ENCODE measurements at regions of chr3 and their contacts with region 1.

Region 1: GRCh38 chr3:28328188-28329151 is 20.1 kb upstream of the ZCWPW2 start:
- DNase-seq: no peak
- ATAC-seq: no peak
- H3K4me3 Mint-ChIP-seq: no peak overlapping the region
- H3K27ac Mint-ChIP-seq: no peak overlapping the region
- H3K4me1 Mint-ChIP-seq: no peaks in the 10 kb centered on the region
- H3K27me3 Mint-ChIP-seq: no peaks in the 10 kb centered on the region
- CTCF ChIP-seq: peak; percentile 66

Region 2: DNA sequence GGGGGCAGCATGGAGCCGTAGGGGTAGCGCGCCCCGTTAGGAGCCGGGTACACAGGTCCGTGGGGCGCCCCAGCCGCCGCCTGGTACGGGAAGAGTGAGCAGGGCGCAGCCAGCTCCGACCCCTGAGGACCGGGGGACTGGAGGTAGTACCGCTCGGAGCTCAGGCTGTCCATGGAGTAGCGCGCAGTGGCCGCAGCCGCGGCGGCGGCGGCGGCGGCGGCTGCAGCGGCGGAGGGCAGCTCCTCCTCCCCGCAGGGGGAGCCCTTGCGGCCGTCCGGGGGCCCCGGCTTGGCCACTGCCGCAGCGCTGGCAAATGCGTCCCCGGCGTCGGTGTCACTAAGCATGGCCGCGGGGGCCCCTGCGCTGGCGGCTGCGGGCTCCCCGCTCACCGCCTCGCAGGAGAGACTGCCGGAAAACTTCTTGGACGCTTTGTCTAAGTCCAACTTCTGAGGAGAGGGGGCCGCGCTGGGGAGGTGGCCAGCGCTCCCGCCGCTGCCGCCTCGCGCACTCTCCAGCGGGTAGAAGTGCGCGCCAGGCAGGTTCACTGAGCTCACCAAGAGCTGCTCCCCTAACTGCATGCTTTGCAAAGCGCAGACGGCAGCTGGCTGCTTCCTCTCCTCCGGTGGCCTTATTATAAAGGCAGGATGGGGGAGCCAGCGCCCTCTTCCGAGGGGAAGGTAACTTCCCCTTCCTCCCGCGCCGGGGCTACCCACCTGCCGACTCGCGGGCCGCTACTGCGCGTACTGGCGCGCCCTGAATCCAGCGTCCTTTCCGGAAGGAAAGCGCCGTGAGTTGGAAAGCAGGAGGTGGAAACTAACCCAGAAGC is 606.5 kb before region 1 on chr3 and contains the start of gene EOMES:
- CTCF ChIA-PET with region 1: interaction called, 13 read pairs
- POLR2A ChIA-PET with region 1: no interaction called
- DNase-seq: peak; percentile 81
- ATAC-seq: peak; percentile 69
- H3K4me3 Mint-ChIP-seq: peak within 1 kb of the TSS; percentile 85
- H3K27ac Mint-ChIP-seq: no peak within 1 kb of the TSS
- H3K4me1 Mint-ChIP-seq: peaks cover 78% of the 10 kb centered on the region
- H3K27me3 Mint-ChIP-seq: peaks cover 94% of the 10 kb centered on the region
- CTCF ChIP-seq: peak; percentile 23
- total RNA-seq, gene EOMES: 0.76 to 1.4 TPM (median 1.1 TPM) in 3 replicates

Region 3: DNA sequence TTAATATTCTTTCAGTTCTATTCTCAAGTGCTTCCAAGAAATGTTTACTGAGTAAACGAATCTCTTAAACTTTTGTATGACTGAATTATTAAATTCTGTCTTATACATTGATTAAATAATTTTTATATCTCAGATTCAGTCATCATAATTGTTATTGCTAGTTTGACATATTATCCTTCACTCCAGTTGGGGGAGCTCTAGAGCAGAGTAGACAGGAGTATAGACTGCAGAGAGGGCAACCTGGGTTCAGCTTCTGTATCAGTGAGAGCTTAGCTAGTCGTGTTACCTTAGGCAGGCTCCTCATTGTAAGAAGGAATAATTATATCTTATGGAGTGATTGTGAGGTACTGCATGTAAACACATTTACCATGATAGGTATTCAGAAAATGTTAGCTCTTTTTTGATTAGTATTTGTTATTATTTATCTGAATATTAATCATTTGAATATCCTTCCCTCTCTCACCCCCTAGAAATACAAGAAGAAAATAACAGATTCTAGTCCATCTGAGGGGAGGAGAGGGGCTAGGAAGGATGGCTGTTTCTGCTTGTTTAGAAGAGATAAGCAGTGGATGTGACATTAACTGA is 10.9 kb before region 1 on chr3:
- CTCF ChIA-PET with region 1: interaction called, 20 read pairs
- POLR2A ChIA-PET with region 1: no interaction called
- DNase-seq: no peak
- ATAC-seq: peak; percentile 95
- H3K4me3 Mint-ChIP-seq: no peak overlapping the region
- H3K27ac Mint-ChIP-seq: no peak overlapping the region
- H3K4me1 Mint-ChIP-seq: peaks cover 9% of the 10 kb centered on the region
- H3K27me3 Mint-ChIP-seq: no peaks in the 10 kb centered on the region
- CTCF ChIP-seq: no peak

Region 4: DNA sequence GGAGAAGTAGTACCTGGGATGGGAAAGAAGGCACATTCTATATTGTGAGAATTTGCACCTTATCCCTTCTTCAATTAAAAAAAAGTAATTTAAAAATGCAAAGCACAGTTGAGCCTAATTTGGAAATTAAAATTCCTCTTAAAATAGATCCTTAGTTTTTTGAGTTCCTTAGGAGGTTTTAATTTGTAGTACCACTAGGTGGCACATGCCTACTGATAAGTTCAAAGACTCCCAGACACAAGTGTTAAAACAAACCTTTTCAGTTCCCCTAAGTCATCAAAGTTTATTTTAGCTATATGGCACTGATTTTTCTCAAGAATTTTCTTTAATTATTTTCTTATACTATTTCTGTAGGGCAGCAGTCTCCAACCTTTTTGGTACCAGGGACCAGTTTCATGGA is 147.7 kb after region 1 on chr3:
- CTCF ChIA-PET with region 1: no interaction called
- POLR2A ChIA-PET with region 1: no interaction called
- DNase-seq: no peak
- ATAC-seq: no peak
- H3K4me3 Mint-ChIP-seq: no peak overlapping the region
- H3K27ac Mint-ChIP-seq: no peak overlapping the region
- H3K4me1 Mint-ChIP-seq: no peaks in the 10 kb centered on the region
- H3K27me3 Mint-ChIP-seq: no peaks in the 10 kb centered on the region
- CTCF ChIP-seq: peak; percentile 61

Measured in WTC11 (cell line).